ENCODE measurements at regions of chr11 and their contacts with region 1.

Region 1: DNA sequence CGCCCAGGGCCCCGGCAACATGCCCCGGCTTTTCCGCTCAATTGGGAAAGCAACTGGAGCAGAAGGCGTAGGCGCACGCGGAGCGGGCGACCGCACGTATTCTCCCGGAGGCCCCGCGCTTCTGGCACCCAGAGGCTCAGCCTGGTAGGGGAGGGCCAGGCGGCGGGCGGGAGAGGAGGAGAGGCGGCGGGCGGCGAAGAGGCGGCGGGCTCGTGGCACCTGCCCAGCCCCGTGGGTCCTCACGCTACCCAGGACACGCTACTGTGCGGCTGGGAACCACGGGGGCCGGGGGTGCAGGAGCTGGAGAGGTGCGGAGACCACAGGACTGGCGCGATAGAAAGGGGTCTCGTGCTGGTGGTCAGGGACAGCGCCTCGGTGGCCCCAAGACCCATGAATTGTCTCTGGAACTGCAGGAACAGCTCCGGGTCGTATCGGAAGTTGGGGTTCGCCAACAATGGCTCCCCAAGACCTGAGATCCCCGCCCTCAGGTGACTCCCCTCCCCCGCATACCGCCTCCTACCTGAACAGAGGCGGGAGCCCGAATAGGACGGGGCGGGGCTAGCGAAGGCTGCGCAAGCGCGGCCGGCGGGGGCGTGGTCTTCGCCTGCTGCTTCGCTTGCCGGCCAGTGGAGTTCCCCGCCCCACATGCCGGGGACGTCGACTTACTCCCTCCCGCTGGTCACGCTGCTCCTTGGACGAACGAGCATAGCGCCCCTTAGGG is at the start of gene SLC37A4:
- DNase-seq: peak; percentile 99
- H3K4me3 Mint-ChIP-seq: peak within 1 kb of the TSS; percentile 82
- H3K27ac Mint-ChIP-seq: peak within 1 kb of the TSS; percentile 89
- H3K4me1 Mint-ChIP-seq: peaks cover 18% of the 10 kb centered on the region
- H3K27me3 Mint-ChIP-seq: no peaks in the 10 kb centered on the region
- total RNA-seq, gene SLC37A4: 33.4 to 37.0 TPM

Region 2: GRCh38 chr11:118997627-118998387 is 32.7 kb before region 1 on chr11 and contains the start of gene CENATAC:
- CTCF ChIA-PET with region 1: no interaction called
- POLR2A ChIA-PET with region 1: interaction called, 5 read pairs
- intact Hi-C with region 1: loop called (anchors 1 kb)
- DNase-seq: peak; percentile 98
- H3K4me3 Mint-ChIP-seq: peak within 1 kb of the TSS; percentile 88
- H3K27ac Mint-ChIP-seq: peak within 1 kb of the TSS; percentile 94
- H3K4me1 Mint-ChIP-seq: peaks cover 28% of the 10 kb centered on the region
- H3K27me3 Mint-ChIP-seq: no peaks in the 10 kb centered on the region
- total RNA-seq, gene CENATAC: 21.4 to 22.3 TPM